ENCODE measurements at regions of chr5 and their contacts with region 1.

Region 1: DNA sequence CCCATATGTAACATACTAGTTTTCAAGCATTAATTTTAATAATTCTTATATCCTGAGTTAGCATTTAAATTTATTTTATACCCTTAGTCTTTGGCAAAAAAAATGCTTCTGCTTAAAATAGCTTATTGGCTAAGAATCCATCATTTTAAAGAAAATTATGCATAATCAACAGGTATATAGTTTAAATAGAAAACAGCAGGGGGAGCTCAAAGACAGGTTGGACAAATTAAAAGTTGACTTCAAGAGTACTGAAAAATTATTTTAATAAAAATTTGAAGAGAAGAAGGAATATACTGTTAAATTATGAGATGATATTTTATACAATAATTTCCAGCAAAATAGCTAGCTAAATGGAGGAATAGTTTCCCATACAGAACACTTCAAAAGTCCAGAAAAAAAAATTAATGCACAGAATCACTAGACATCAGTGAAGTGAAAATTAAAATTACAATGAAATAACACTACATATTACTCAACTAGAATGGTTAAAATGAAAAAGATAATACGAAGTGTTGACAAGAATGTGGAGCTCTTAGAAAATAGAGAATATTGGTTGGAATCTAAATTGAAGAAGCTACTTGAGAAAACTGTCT is 387.1 kb downstream of the PDE4D start:
- DNase-seq: peak; percentile 57
- H3K4me3 ChIP-seq: no peak overlapping the region
- H3K27ac ChIP-seq: no peak overlapping the region
- H3K4me1 ChIP-seq: no peaks in the 10 kb centered on the region
- CTCF ChIP-seq: peak; percentile 92

Region 2: GRCh38 chr5:59025734-59026133 is 480.6 kb before region 1 on chr5:
- CTCF ChIA-PET with region 1: no interaction called
- POLR2A ChIA-PET with region 1: no interaction called
- intact Hi-C with region 1: no loop called
- DNase-seq: no peak
- H3K4me3 ChIP-seq: no peak overlapping the region
- H3K27ac ChIP-seq: no peak overlapping the region
- H3K4me1 ChIP-seq: no peaks in the 10 kb centered on the region
- CTCF ChIP-seq: no peak

Region 3: GRCh38 chr5:59660737-59661136 is 154.4 kb after region 1 on chr5:
- CTCF ChIA-PET with region 1: no interaction called
- POLR2A ChIA-PET with region 1: interaction called, 3 read pairs
- intact Hi-C with region 1: loop called (anchors 1 kb)
- DNase-seq: peak; percentile 33
- H3K4me3 ChIP-seq: no peak overlapping the region
- H3K27ac ChIP-seq: no peak overlapping the region
- H3K4me1 ChIP-seq: peaks cover 7% of the 10 kb centered on the region
- CTCF ChIP-seq: peak; percentile 73

Region 4: DNA sequence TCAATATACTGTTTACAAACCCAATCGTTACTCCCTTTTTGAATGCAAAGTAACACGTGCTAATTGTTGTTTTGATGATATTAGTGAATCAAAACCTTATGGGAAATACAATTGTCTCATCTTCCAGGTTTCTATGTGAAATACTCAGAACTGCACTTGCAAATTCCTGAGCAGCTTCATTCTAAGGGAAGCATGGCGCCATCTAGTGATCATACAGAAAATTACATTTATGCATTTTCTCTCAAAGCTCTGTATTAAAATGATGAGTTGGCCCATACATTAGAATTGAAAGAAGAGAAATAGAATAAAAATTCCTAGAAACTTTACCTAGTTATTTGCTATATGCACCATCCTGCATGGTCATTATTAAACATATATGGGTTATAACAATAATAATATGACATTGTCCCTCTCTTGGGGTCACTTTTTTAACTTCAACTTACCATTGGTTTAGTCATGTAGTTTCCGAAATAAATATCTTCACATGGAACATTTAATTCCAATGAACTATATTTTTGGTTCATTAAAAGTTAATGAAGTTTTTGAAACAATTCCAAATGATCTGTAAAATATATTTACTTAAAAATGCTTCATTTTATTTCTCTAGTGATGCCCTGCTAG is 167.2 kb after region 1 on chr5:
- CTCF ChIA-PET with region 1: no interaction called
- POLR2A ChIA-PET with region 1: no interaction called
- intact Hi-C with region 1: loop called (anchors 1 kb)
- DNase-seq: peak; percentile 71
- H3K4me3 ChIP-seq: no peak overlapping the region
- H3K27ac ChIP-seq: no peak overlapping the region
- H3K4me1 ChIP-seq: no peaks in the 10 kb centered on the region
- CTCF ChIP-seq: peak; percentile 97

Region 5: DNA sequence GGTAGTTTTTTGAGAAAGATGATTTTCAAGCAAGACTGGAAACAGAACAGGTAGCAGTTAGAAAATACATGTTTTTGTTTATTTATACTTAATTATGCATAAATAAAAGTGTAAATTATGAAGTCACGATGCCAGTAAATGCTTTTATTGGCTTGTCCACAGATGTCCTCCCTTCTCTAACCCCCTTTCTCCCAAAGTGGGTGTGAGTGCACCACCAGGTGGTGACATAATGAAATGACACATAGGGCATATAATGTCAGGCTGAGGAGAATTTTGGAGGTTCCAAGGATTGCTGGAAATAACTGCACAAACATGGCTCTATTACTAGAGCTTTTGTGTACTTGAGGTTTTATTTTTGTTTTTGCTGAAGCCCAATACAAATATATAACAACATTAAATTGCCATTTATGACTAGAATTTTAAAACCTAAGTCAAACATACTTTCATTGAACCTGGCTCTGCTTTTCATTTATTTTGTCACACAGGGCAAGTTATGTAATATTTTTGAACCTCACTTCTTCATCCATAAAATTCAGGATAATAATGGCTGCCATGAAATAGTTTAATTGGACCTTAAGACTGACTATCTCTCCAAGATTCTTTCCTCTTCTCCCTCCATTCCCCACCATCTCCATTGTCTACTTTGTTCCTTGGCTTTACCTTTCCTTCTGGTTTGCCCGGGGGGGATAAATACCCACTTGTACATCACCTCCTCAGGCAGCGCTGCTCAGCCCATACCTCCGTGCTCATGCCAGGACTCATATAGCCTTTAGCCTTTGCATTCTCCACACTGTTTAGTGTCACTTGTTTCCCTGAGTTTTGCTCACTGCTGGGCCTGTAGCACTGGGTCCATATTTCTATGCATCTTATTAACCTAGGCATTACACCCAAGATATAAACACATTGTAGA is 218.4 kb after region 1 on chr5:
- CTCF ChIA-PET with region 1: interaction called, 3 read pairs
- POLR2A ChIA-PET with region 1: no interaction called
- intact Hi-C with region 1: loop called (anchors 2 kb)
- DNase-seq: peak; percentile 55
- H3K4me3 ChIP-seq: no peak overlapping the region
- H3K27ac ChIP-seq: no peak overlapping the region
- H3K4me1 ChIP-seq: no peaks in the 10 kb centered on the region
- CTCF ChIP-seq: peak; percentile 90